ENCODE measurements at regions of chr1 and their contacts with region 1.

Region 1: DNA sequence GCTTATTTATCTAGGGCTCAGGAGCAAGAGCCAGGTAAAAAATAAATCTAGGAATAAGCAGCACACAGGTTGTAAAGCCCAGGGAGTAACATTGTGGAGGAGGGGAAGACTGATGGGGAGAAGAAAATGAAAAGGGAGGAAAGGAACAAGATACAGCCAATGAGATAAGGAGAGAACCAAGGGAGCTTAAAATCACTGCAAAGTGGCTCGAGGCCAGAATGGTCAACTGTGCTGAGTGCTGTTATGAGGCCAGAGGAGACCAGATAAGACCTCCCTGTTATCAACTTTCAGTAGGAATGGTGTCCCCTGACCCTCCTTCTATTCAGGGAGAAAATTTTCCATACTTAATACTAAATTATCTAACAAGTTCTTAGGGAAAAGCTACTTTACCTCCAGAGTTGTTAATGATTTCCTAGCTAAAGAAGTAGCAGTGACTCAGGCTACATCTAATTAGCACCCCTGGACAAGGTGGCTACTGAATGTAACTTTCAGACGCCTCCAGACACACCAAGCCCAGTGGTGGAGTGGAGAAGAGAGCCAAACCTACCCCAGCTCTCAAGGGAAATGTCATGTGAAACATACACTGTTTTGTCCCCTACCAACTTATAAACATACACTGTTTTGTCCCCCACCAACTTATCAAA is 25.5 kb downstream of the ENAH start:
- DNase-seq: no peak
- H3K4me3 ChIP-seq: no peak overlapping the region
- CTCF ChIP-seq: no peak

Region 2: DNA sequence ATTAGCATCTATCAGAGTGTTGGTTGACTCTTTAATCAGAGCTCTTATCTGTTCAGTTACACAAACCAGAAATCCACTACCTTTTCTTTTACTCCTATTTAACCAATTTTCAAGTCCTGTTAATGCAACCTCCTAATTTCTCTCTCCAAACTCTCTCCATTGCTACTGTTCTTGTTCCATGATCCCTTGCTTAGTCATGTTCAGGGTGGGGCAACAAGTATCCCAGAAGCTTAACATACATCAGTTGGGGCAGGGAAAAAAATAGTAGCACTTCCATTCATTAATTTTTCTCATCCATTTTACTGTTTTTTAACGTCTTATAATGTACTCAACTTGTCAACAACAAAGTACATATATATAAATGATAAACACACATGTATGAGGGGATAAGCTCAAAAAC is 88.4 kb before region 1 on chr1:
- in situ Hi-C with region 1: loop called (anchors 5 kb)
- DNase-seq: no peak
- H3K4me3 ChIP-seq: no peak overlapping the region
- CTCF ChIP-seq: no peak